Activated CD4-positive, alpha-beta T cell treated with anti-CD3 and anti-CD28 coated beads for 36 hours (primary cell): ENCODE measurements at regions of chr7 and their contacts with region 1.

Region 1: DNA sequence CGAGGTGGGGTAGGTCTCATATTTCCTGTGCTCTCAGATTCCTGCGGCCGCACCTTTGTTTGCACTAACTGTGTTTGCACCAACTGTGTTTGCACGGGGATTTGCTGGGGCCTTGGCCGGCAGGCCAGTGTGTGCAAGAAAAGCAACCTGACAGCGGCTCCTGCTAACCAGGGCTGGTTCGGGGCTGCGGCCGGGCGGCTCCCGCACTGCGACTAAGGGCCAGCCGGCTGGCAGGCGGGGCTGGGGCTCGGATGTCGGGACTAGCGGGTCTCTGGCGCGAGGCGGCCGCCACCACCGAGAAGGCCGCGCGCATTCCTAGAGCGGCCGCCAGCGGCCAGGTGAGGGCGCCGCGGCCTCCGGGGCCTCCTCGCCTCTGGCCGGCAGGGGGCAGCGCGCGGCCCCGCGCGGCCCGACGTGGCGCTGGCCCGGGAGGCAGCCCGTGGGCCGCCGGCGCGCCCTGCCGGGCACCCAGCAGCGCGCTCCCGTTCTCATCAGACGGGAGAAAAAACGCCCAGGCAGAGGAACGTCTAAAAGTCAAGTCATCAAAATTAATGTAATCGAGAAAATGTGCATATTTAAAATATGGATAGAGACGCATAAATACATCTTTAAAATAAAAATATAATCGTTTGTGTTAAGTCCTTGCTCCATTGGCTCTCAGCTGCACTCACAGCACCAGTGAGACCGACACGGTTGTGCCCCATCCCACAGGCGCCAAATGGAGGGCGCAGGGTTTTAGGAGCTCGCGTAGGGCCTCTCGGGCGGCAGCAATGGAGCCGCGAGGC is 38.5 kb downstream of the ZNF777 start:
- DNase-seq: peak; percentile 84
- ATAC-seq: peak; percentile 98
- H3K4me3 Mint-ChIP-seq: peak overlapping the region; percentile 65
- H3K27ac Mint-ChIP-seq: peak overlapping the region; percentile 63
- H3K4me1 Mint-ChIP-seq: peaks cover 9% of the 10 kb centered on the region
- H3K27me3 Mint-ChIP-seq: no peaks in the 10 kb centered on the region

Region 2: GRCh38 chr7:148987010-148987750 is 435.1 kb before region 1 on chr7:
- CTCF ChIA-PET with region 1: no interaction called
- POLR2A ChIA-PET with region 1: no interaction called
- intact Hi-C with region 1: loop called in 1 of 2 experiments (anchors 5 kb)
- DNase-seq: peak; percentile 88
- ATAC-seq: peak; percentile 84
- H3K4me3 Mint-ChIP-seq: peak overlapping the region; percentile 90
- H3K27ac Mint-ChIP-seq: peak overlapping the region; percentile 97
- H3K4me1 Mint-ChIP-seq: peaks cover 40% of the 10 kb centered on the region
- H3K27me3 Mint-ChIP-seq: peaks cover 2% of the 10 kb centered on the region

Region 3: DNA sequence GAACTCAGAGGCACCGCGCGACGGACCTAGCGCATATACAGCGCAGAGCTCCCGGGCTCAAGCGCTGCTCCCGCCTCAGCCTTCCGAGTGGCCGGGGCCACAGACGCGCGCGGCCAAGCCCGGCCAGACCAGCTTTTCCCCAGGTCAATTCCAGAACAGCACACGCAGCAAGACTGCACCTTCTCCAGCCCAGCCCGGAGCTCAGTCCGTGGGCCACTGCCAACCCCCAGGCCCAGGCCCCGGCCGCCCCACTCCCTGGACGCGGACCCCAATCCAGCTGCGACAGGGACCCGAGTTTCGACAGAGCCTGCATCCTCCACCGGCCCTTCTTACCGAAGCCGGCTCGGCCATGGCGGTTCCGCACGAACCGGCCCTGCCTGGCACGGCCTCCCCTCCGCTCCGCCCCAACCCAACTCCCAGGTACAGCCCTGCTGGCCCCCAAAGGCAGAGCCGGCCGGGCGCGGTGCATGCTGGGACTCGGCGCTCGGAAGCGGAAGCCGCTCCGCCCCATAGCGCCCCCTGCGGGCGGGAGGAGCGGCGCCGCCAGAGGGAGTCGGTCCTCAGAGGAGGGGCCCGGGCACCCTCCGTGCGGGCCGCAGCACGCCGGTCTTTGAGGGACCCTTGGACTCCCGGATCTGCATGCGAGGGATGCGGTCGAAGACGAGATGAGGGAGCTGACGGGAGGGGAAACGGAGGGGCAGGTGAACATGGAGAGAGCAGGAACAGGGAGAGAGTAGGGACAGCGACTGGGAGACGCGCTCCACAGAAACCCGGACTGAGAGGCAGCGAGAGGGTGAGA is 296.3 kb before region 1 on chr7 and contains the start of gene ZNF425:
- CTCF ChIA-PET with region 1: no interaction called
- POLR2A ChIA-PET with region 1: no interaction called
- intact Hi-C with region 1: loop called in 1 of 2 experiments (anchors 2 kb)
- DNase-seq: peak; percentile 96
- ATAC-seq: peak; percentile 88
- H3K4me3 Mint-ChIP-seq: peak within 1 kb of the TSS; percentile 83
- H3K27ac Mint-ChIP-seq: peak within 1 kb of the TSS; percentile 99
- H3K4me1 Mint-ChIP-seq: peaks cover 21% of the 10 kb centered on the region
- H3K27me3 Mint-ChIP-seq: no peaks in the 10 kb centered on the region
- total RNA-seq, gene ZNF425: 0.43 to 0.95 TPM

Region 4: GRCh38 chr7:149147072-149147751 is 275.1 kb before region 1 on chr7 and contains the start of gene ZNF398:
- CTCF ChIA-PET with region 1: interaction called, 3 read pairs
- POLR2A ChIA-PET with region 1: no interaction called
- intact Hi-C with region 1: loop called (anchors 1 to 5 kb)
- DNase-seq: peak; percentile 87
- ATAC-seq: peak; percentile 71
- H3K4me3 Mint-ChIP-seq: peak within 1 kb of the TSS; percentile 98
- H3K27ac Mint-ChIP-seq: peak within 1 kb of the TSS; percentile 99
- H3K4me1 Mint-ChIP-seq: peaks cover 34% of the 10 kb centered on the region
- H3K27me3 Mint-ChIP-seq: no peaks in the 10 kb centered on the region
- total RNA-seq, gene ZNF398: 9.6 to 10.5 TPM

Region 5: DNA sequence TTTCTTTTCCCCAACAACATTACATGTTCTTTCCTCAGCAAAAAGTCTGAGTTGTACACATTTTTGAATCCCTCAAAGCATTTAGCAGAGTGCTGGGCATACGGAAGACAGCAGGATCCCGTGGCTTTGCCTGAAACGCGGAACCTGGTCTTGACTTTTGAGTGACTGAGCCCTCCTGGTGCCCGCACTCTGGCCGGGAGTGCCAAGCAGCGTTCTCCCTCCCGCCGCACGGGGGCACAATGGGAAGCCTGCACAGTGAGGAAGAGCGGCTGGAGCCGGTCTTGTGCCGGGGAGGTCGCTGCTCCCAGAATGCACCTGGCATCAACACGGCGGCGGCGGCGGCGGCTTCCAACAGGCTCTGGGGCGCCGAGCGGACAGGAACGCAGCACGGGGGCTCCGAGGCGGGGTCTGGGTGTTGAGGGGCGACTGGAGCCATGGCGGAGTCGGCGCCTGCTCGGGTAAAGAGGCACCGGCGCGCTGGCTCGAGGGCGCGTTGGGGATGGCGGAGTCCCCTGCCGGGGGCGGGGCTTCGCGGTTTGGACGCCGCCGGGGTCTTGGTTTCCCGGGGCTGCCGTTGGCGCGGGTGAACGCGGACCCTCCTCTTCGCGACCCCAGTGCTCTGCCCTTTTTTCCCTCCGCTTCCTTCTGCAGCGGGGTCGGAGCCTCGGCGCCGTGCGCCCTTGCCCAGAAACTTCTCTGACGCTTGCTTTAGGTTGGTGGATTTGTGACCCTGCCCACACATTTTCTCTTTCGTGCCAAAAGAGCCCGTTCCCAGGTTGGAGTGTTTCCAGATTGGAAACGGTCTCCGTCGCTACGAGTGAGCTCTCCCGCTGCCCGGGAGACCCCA is 182.8 kb before region 1 on chr7 and contains the start of gene ZNF212:
- CTCF ChIA-PET with region 1: no interaction called
- POLR2A ChIA-PET with region 1: no interaction called
- intact Hi-C with region 1: loop called in 1 of 2 experiments (anchors 1 kb)
- DNase-seq: peak; percentile 95
- ATAC-seq: peak; percentile 98
- H3K4me3 Mint-ChIP-seq: peak within 1 kb of the TSS; percentile 93
- H3K27ac Mint-ChIP-seq: peak within 1 kb of the TSS; percentile 83
- H3K4me1 Mint-ChIP-seq: peaks cover 32% of the 10 kb centered on the region
- H3K27me3 Mint-ChIP-seq: no peaks in the 10 kb centered on the region
- total RNA-seq, gene ZNF212: 9.9 to 15.9 TPM

Region 6: DNA sequence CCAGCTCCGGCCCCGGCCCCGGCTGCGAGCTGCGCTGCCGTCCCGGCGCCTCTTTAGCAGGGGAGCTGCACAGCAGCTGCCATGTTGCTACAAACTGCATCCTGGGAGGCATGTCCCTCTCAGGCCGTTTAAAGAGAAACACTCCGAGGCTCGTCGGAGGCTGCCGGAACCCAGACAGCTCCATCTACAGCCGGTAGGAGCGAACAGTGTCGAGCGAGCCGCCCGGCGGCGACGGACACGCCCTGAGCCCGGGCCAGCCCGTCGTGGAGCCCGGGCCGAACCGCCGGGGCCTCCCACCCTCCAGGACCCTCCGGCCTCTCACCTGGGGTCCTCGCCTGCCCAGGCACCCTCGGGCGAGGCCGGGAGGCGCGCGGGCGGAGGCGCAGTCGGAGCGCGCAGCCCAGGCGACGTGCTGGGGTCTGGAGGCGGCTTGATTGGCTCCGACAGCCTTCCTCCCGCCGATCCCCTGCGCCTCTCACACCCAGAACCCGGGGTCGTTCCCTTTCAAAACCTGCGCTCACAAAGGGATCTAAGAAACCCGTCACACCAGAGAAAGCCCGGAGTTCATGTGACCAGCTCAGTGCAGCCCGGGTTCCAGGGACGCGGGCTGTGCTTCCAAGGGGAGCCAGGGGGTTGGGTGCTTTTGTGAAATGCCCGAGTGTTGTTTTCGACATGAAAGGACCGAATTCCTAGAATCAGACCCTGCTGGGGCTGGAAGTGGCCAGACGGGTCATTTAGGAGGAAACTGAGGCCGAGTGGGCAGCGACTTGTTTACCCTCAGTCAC is 38.4 kb after region 1 on chr7 and contains the start of gene ZNF777:
- CTCF ChIA-PET with region 1: interaction called, 14 read pairs
- POLR2A ChIA-PET with region 1: no interaction called
- intact Hi-C with region 1: loop called (anchors 1 to 2 kb)
- DNase-seq: peak; percentile 90
- ATAC-seq: peak; percentile 96
- H3K4me3 Mint-ChIP-seq: peak within 1 kb of the TSS; percentile 84
- H3K27ac Mint-ChIP-seq: peak within 1 kb of the TSS; percentile 87
- H3K4me1 Mint-ChIP-seq: peaks cover 21% of the 10 kb centered on the region
- H3K27me3 Mint-ChIP-seq: peaks cover 10% of the 10 kb centered on the region
- total RNA-seq, gene ZNF777: 13.3 to 16.4 TPM

Region 7: DNA sequence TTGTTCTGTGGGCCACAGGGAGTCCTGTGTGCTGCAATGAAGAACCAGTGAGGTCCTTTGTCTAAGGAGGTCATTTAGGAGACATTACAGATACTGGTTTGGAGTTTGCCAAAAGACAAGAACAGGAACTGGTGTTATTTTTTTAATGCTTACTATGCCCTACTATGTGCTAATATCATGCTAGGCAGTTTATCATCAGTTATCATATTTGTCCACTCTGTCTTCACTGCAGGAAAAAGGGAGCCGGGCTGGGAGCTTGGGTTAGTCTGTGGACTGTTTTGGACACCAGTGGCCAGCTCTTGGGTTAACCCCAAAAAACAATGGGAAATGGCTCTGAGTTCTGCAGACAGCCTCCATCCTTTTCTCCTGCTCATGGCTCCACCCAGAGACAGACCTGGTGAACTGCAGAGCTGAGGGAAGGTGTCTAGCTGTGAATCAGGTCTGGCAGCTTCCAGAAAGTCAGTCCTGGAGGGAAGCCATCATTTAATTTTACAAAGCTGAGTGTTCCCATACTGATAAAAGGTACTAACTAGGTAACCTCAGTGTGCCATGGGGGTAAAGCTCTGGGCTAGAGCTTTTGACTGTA is 176.5 kb after region 1 on chr7:
- CTCF ChIA-PET with region 1: interaction called, 6 read pairs
- POLR2A ChIA-PET with region 1: no interaction called
- intact Hi-C with region 1: loop called in 1 of 2 experiments (anchors 1 kb)
- DNase-seq: peak; percentile 65
- ATAC-seq: peak; percentile 38
- H3K4me3 Mint-ChIP-seq: no peak overlapping the region
- H3K27ac Mint-ChIP-seq: no peak overlapping the region
- H3K4me1 Mint-ChIP-seq: peaks cover 34% of the 10 kb centered on the region
- H3K27me3 Mint-ChIP-seq: no peaks in the 10 kb centered on the region